ENCODE measurements at regions of chr17 and their contacts with region 1.

Region 1: GRCh38 chr17:4215882-4216570 is 47.8 kb downstream of the ANKFY1 start:
- H3K4me3 ChIP-seq: no peak overlapping the region
- H3K27ac ChIP-seq: no peak overlapping the region
- H3K4me1 ChIP-seq: peaks cover 21% of the 10 kb centered on the region
- CTCF ChIP-seq: no peak

Region 2: DNA sequence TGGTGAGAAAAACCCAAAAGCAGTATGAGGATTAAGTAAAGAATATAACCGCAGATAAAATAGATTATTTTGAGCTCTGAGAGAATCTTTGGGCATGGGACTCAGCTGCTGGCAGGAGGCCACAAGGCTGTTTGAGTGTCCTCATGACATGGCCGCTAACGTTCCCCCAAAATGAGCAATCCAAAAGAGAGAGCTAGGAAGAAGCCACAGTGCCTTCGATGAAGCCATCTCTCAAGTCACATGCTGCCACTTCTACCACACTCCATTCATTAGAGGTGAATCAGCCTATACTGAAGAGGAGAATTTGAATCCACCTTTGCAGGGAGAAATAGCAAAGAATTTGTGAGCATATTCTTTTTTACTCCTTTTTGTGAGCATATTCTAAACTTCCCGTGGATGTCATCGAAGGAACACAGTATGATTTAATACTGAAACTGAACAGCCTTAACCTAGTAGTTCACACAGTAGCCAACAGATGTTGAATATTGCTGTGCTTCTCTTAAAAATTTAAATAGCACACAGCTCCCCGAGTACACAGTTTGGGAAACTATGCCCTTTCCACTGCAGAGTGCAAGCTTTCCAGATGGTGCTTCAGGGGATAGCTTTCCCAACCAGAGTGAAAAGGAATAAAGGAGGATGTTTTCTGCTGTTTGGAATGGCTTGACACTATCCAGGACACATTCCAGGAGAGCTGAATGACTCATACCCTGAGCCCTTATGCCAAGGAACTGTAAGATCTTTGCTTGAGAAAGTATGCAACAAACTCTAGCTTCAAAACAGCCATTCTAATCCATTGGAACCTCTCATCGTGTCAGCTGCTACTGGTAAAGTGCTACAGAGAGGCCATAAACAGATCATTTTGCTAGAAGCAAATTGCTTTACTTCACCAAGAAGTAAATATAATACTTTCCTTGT is 13.9 kb after region 1 on chr17:
- CTCF ChIA-PET with region 1: interaction called, 28 read pairs
- POLR2A ChIA-PET with region 1: no interaction called
- H3K4me3 ChIP-seq: no peak overlapping the region
- H3K27ac ChIP-seq: peak overlapping the region; percentile 33; the same call in 1 of the 2 replicates
- H3K4me1 ChIP-seq: peaks cover 5% of the 10 kb centered on the region; the same call in 1 of the 2 replicates
- CTCF ChIP-seq: no peak

Region 3: GRCh38 chr17:4249452-4250029 is 33.5 kb after region 1 on chr17:
- CTCF ChIA-PET with region 1: interaction called, 67 read pairs
- POLR2A ChIA-PET with region 1: interaction called, 5 read pairs
- H3K4me3 ChIP-seq: no peak overlapping the region
- H3K27ac ChIP-seq: no peak overlapping the region
- H3K4me1 ChIP-seq: peaks cover 22% of the 10 kb centered on the region
- CTCF ChIP-seq: peak; percentile 14; the same call in 1 of the 2 replicates

Region 4: DNA sequence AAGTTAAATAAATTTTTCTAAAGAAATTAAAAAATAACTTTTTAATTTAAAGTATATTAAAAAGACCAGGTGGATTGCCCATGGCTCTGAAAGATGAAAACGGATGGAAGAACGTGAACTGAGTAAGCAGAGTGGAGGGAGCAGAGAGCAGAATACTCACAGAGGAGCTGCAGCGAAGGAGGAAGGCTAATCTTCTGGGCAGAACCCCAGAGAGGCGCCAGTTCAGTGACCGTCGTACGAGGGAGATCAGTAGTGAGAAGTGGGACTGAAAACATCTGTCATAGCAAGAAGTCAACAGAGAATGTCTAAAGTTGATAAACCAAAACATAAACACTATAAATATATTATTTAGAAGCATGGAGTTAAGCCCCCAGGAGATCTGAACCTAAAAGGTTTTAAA is 115.6 kb after region 1 on chr17:
- CTCF ChIA-PET with region 1: no interaction called
- POLR2A ChIA-PET with region 1: no interaction called
- H3K4me3 ChIP-seq: no peak overlapping the region
- H3K27ac ChIP-seq: peak overlapping the region; percentile 29; the same call in 1 of the 2 replicates
- H3K4me1 ChIP-seq: peaks cover 44% of the 10 kb centered on the region
- CTCF ChIP-seq: no peak

Region 5: DNA sequence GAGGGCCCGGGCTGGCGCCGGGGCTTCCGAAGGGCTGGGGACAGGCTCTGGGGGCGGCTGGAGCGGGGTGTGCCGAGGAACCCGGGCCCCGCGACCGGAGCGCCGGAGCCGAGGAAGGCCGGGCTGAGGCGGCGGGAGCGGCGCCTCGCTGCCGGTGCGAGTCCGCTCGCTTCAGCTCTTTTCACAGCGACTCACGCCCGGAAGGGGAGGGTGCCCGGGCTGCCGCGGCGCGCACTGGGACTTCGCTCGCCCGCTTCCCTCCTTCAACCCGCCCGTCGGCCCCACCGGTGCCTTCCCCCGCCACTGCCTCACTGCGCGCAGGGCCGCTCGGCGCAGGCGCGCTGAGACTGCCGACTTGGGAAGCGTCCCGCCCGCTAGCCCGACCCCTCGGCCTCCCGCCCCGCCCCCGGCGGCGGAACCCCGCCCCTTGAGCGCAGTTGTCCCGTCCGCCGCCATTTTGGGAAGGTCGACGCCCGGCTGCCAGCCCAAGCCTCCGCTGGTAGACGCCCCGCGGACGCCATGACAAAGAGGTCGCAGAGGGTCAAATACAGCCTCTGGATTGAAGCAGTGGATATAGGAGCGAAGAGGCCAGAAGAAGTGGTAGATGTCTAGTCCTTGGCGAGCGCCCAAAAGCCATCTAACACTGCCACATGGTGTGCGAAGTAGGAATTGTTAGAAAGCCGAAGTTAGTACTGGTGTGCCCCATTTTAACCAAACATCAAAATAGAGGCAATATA is 150.5 kb after region 1 on chr17 and contains the start of gene UBE2G1:
- CTCF ChIA-PET with region 1: interaction called, 11 read pairs
- POLR2A ChIA-PET with region 1: interaction called, 3 read pairs
- H3K4me3 ChIP-seq: peak within 1 kb of the TSS; percentile 95
- H3K27ac ChIP-seq: peak within 1 kb of the TSS; percentile 98
- H3K4me1 ChIP-seq: peaks cover 5% of the 10 kb centered on the region
- CTCF ChIP-seq: peak; percentile 77; the same call in 1 of the 2 replicates

Region 6: GRCh38 chr17:4412933-4413831 is 197.2 kb after region 1 on chr17:
- CTCF ChIA-PET with region 1: interaction called, 63 read pairs
- POLR2A ChIA-PET with region 1: interaction called, 3 read pairs
- H3K4me3 ChIP-seq: no peak overlapping the region
- H3K27ac ChIP-seq: no peak overlapping the region
- H3K4me1 ChIP-seq: no peaks in the 10 kb centered on the region
- CTCF ChIP-seq: peak; percentile 95